PC-9 (cell line): ENCODE measurements at regions of chr17 and their contacts with region 1.

Region 1: GRCh38 chr17:43556292-43556691 is 10.2 kb upstream of the ETV4 start:
- DNase-seq: peak; percentile 76 to 91
- H3K4me3 ChIP-seq: peak overlapping the region; percentile 30; the same call in 1 of the 2 replicates
- H3K27ac ChIP-seq: peak overlapping the region; percentile 81
- H3K4me1 ChIP-seq: peaks cover 25% of the 10 kb centered on the region
- H3K27me3 ChIP-seq: no peaks in the 10 kb centered on the region
- CTCF ChIP-seq: no peak

Region 2: GRCh38 chr17:43456661-43457361 is 99.5 kb before region 1 on chr17:
- CTCF ChIA-PET with region 1: no interaction called
- POLR2A ChIA-PET with region 1: no interaction called
- intact Hi-C with region 1: no loop called
- DNase-seq: no peak
- H3K4me3 ChIP-seq: no peak overlapping the region
- H3K27ac ChIP-seq: no peak overlapping the region
- H3K4me1 ChIP-seq: peaks cover 25% of the 10 kb centered on the region
- H3K27me3 ChIP-seq: no peaks in the 10 kb centered on the region
- CTCF ChIP-seq: no peak

Region 3: DNA sequence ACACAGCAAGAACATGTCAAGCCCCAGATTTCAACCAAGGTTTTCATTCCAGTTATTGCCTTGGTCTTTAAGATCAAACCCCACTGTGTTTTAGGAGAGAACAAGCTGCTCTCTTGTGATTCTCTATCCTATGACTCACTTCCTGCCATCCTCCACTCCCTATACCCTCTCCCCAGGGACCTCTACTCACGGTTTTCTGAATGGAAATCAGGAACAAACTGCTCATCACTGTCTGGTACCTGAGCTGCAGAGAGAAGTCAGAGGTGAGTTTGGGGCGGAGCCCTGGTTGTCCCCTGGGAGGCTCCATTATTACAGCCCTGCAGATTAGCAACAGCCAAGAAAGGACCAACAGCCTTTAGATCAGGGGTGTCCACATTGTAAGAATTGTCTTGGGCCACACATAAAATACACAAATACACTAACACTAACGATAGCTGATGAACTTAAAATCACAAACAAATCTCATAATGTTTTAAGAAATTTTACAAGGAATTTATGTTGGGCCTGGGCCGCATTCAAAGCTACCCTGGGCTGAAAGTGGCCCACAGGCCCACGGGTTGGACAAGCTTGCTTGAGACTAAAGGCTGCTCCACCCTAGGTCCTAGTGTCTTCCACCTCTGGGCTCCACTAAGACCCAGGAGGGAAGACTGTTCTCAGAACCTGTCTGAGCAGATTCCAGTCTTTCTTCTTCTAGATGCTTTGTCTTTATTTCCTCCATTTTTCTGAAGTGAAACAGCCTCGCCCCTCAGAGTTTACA is 19.9 kb before region 1 on chr17:
- CTCF ChIA-PET with region 1: interaction called, 3 read pairs
- POLR2A ChIA-PET with region 1: interaction called, 10 read pairs
- intact Hi-C with region 1: no loop called
- DNase-seq: peak; percentile 31 to 71
- H3K4me3 ChIP-seq: no peak overlapping the region
- H3K27ac ChIP-seq: peak overlapping the region; percentile 32
- H3K4me1 ChIP-seq: peaks cover 50% of the 10 kb centered on the region
- H3K27me3 ChIP-seq: no peaks in the 10 kb centered on the region
- CTCF ChIP-seq: no peak

Region 4: DNA sequence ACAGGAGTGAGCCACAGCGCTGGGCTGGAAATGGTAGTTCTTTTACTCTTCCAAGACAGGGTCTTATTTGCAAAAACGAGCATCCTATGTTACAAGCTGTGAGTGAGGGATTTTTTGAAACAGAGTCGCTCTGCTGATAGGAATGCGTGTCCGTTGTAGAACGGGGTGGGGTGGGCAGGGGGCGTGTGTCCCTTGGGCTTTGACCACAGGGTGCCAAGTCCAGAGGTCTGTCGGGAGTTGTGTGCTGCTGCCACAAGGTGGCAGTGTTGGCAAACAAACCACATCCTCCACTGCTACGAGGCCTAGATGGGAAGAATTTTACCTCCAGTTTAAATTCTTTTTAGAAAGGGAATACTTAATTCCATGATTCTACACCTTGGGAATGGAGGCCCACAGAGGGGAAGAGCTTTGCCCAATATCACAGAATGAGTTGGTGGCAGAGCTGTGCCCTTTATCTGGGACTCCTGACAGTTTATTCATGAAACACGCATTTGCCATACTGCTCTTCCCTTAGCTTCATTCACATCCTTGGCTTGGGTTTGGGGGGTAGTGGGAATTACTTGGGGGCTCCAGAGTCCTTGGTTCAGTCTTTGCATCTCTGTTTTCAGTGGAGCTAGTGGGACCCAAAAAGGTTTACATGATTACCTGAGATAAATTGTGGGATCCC is 20.4 kb after region 1 on chr17:
- CTCF ChIA-PET with region 1: no interaction called
- POLR2A ChIA-PET with region 1: no interaction called
- intact Hi-C with region 1: no loop called
- DNase-seq: peak; percentile 55 to 67
- H3K4me3 ChIP-seq: no peak overlapping the region
- H3K27ac ChIP-seq: no peak overlapping the region
- H3K4me1 ChIP-seq: peaks cover 52% of the 10 kb centered on the region
- H3K27me3 ChIP-seq: no peaks in the 10 kb centered on the region
- CTCF ChIP-seq: peak; percentile 95

Region 5: DNA sequence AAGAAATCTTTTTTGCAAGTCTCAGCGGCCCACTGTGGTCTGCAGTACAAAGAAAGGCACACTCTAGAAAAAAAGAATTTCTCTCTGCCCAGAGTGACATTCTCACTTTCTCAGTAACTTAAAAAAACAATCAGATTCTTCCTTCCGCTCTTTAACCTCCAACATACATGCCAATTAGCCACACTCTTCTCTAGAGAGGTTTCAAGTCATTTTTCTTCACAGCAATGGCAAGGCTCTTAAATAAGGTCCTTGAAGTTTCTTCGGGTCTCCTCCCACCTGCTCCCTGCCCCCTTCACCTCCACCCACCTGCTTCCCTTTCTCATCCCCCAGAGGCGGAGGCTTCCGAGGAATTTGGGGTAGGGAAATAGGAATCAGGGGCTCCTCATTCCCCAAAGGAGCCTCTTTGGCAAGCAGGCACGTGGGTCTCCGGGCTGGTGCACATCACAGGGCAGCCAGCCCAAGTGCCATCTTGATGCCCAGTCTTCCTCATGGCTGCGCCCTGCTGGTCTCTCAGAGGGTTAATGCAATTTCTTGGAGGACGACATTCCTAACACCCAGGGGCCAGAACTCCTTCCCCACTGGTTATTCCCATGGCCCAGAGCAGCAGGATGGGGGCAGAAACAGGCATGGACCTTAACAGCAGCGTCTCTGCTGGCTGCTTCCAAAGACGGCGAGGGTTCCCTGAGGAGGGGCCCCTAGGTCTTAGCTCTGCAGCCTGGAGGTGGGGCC is 106.3 kb after region 1 on chr17:
- CTCF ChIA-PET with region 1: interaction called, 13 read pairs
- POLR2A ChIA-PET with region 1: no interaction called
- intact Hi-C with region 1: no loop called
- DNase-seq: no peak
- H3K4me3 ChIP-seq: no peak overlapping the region
- H3K27ac ChIP-seq: no peak overlapping the region
- H3K4me1 ChIP-seq: peaks cover 18% of the 10 kb centered on the region
- H3K27me3 ChIP-seq: no peaks in the 10 kb centered on the region
- CTCF ChIP-seq: no peak